ENCODE measurements at regions of chr3 and their contacts with region 1.

Region 1: GRCh38 chr3:125055913-125056745 is at the start of gene HEG1:
- DNase-seq: peak; percentile 54 to 85 (median 72)
- ATAC-seq: peak; percentile 78
- H3K4me3 ChIP-seq: peak within 1 kb of the TSS; percentile 94
- H3K4me3 Mint-ChIP-seq: peak within 1 kb of the TSS; percentile 89 to 100 (median 96)
- H3K27ac ChIP-seq: peak within 1 kb of the TSS; percentile 89
- H3K27ac Mint-ChIP-seq: peak within 1 kb of the TSS; percentile 84 to 99 (median 93)
- H3K4me1 ChIP-seq: peaks cover 34 to 35% of the 10 kb centered on the region in 2 donors
- H3K4me1 Mint-ChIP-seq: peaks cover 33 to 51% (median 46%) of the 10 kb centered on the region in 7 donors
- H3K27me3 ChIP-seq: no peaks in the 10 kb centered on the region
- H3K27me3 Mint-ChIP-seq: peaks cover 0 to 37% (median 6%) of the 10 kb centered on the region in 5 donors
- total RNA-seq, gene HEG1: 16.9 to 45.4 (median 20.0) TPM

Region 2: GRCh38 chr3:124730129-124730940 is 325.8 kb before region 1 on chr3 and contains the start of gene UMPS:
- CTCF ChIA-PET with region 1: no interaction called
- POLR2A ChIA-PET with region 1: no interaction called
- intact Hi-C with region 1: loop called (anchors 5 to 10 kb)
- DNase-seq: peak; percentile 85 to 94 (median 91)
- ATAC-seq: peak; percentile 97
- H3K4me3 ChIP-seq: peak within 1 kb of the TSS; percentile 78
- H3K4me3 Mint-ChIP-seq: peak within 1 kb of the TSS; percentile 93 to 100 (median 98)
- H3K27ac ChIP-seq: peak within 1 kb of the TSS; percentile 77
- H3K27ac Mint-ChIP-seq: peak within 1 kb of the TSS; percentile 96 to 100 (median 98)
- H3K4me1 ChIP-seq: peaks cover 11 to 32% of the 10 kb centered on the region in 2 donors
- H3K4me1 Mint-ChIP-seq: peaks cover 20 to 51% (median 48%) of the 10 kb centered on the region in 7 donors
- H3K27me3 ChIP-seq: peaks cover 0 to 4% of the 10 kb centered on the region in 2 donors
- H3K27me3 Mint-ChIP-seq: peaks cover 9 to 27% (median 19%) of the 10 kb centered on the region in 5 donors
- total RNA-seq, gene UMPS: 13.2 to 34.8 (median 24.8) TPM

Region 3: GRCh38 chr3:125003369-125003853 is 52.7 kb before region 1 on chr3:
- CTCF ChIA-PET with region 1: interaction called, 6 read pairs
- POLR2A ChIA-PET with region 1: interaction called, 25 read pairs
- intact Hi-C with region 1: loop called in 1 of 2 experiments (anchors 1 kb)
- DNase-seq: no peak
- ATAC-seq: no peak
- H3K4me3 ChIP-seq: no peak overlapping the region
- H3K4me3 Mint-ChIP-seq: peak overlapping the region in 5 of 10 donors; percentile 17 to 77 (median 43)
- H3K27ac ChIP-seq: peak overlapping the region; percentile 81
- H3K27ac Mint-ChIP-seq: peak overlapping the region in 8 of 9 donors; percentile 92 to 99 (median 96)
- H3K4me1 ChIP-seq: peaks cover 0 to 28% of the 10 kb centered on the region in 2 donors
- H3K4me1 Mint-ChIP-seq: peaks cover 9 to 68% (median 39%) of the 10 kb centered on the region in 7 donors
- H3K27me3 ChIP-seq: no peaks in the 10 kb centered on the region
- H3K27me3 Mint-ChIP-seq: no peaks in the 10 kb centered on the region

Region 4: GRCh38 chr3:125119752-125120378 is 63.7 kb after region 1 on chr3:
- CTCF ChIA-PET with region 1: no interaction called
- POLR2A ChIA-PET with region 1: interaction called, 3 read pairs
- intact Hi-C with region 1: loop called (anchors 2 to 5 kb)
- DNase-seq: no peak
- ATAC-seq: peak; percentile 74
- H3K4me3 ChIP-seq: no peak overlapping the region
- H3K4me3 Mint-ChIP-seq: peak overlapping the region in 8 of 10 donors; percentile 30 to 65 (median 59)
- H3K27ac ChIP-seq: peak overlapping the region; percentile 40
- H3K27ac Mint-ChIP-seq: peak overlapping the region; percentile 65 to 91 (median 81)
- H3K4me1 ChIP-seq: peaks cover 23 to 45% of the 10 kb centered on the region in 2 donors
- H3K4me1 Mint-ChIP-seq: peaks cover 22 to 52% (median 33%) of the 10 kb centered on the region in 7 donors
- H3K27me3 ChIP-seq: no peaks in the 10 kb centered on the region
- H3K27me3 Mint-ChIP-seq: peaks cover 0 to 11% (median 0%) of the 10 kb centered on the region in 5 donors

Region 5: DNA sequence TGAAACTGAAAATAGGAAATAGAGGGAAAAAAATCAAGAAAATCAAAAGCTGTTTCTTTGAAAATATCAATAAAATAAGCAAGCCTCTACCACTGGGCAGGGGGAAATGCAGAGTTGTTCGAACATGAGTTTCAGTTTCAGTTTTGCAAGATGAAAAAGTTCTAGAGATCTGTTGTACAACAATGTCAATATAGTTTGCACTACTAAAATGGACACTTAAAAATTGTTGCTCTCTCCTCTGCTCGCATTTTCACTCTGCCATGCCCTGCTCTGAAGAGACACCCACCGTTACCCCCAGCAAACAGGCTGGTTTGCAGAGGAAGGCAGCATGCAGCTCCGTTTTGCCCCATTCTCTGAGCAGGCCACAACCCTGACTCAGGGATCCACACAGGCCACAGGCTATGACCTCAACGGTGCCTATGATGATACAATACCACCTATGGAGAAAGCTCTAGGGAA is 254.5 kb after region 1 on chr3:
- CTCF ChIA-PET with region 1: no interaction called
- POLR2A ChIA-PET with region 1: no interaction called
- intact Hi-C with region 1: loop called in 1 of 2 experiments (anchors 5 kb)
- DNase-seq: peak; percentile 15 to 51 (median 41)
- ATAC-seq: peak; percentile 92
- H3K4me3 ChIP-seq: peak overlapping the region; percentile 52
- H3K4me3 Mint-ChIP-seq: peak overlapping the region; percentile 78 to 99 (median 94)
- H3K27ac ChIP-seq: peak overlapping the region; percentile 62
- H3K27ac Mint-ChIP-seq: peak overlapping the region; percentile 40 to 97 (median 90)
- H3K4me1 ChIP-seq: peaks cover 0 to 17% of the 10 kb centered on the region in 2 donors
- H3K4me1 Mint-ChIP-seq: peaks cover 28 to 82% (median 65%) of the 10 kb centered on the region in 7 donors
- H3K27me3 ChIP-seq: no peaks in the 10 kb centered on the region
- H3K27me3 Mint-ChIP-seq: no peaks in the 10 kb centered on the region

Region 6: DNA sequence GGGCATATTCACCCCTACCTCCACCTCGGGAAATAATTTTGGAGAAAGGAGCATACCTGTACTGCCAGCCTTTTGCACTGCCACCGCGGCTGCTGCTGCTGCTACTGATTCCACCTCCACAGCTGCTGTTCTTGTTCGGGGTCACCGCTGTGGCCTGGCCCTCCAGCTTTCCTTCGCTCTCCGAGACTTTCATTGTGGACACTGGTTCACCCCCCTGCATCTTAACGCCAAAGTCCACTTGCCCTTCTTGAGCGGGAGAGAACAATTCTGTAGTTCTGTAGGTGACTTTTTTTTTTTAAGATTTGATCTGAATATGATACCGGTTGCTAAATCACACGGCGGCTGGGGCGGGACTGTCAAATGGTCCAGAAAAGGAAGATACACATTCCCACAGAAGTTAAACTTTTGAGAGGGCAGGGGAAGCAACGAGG is 538.5 kb after region 1 on chr3:
- CTCF ChIA-PET with region 1: no interaction called
- POLR2A ChIA-PET with region 1: no interaction called
- intact Hi-C with region 1: loop called (anchors 2 kb)
- DNase-seq: peak in 4 of 9 donors; percentile 10 to 25 (median 16)
- ATAC-seq: no peak
- H3K4me3 ChIP-seq: peak overlapping the region; percentile 82
- H3K4me3 Mint-ChIP-seq: peak overlapping the region; percentile 90 to 99 (median 94)
- H3K27ac ChIP-seq: peak overlapping the region; percentile 90
- H3K27ac Mint-ChIP-seq: peak overlapping the region; percentile 73 to 95 (median 89)
- H3K4me1 ChIP-seq: peaks cover 4 to 15% of the 10 kb centered on the region in 2 donors
- H3K4me1 Mint-ChIP-seq: peaks cover 32 to 50% (median 42%) of the 10 kb centered on the region in 7 donors
- H3K27me3 ChIP-seq: no peaks in the 10 kb centered on the region
- H3K27me3 Mint-ChIP-seq: no peaks in the 10 kb centered on the region

Measured in naive thymus-derived CD4-positive, alpha-beta T cell (primary cell).